Activated CD4-positive, alpha-beta T cell treated with anti-CD3 and anti-CD28 coated beads, Interleukin-2, amount 10 ng/mL, durations not matched to agents 24 days and 14 days (primary cell): ENCODE measurements at regions of chr11 and their contacts with region 1.

Region 1: GRCh38 chr11:102476812-102477211 is 24.2 kb upstream of the TMEM123 start:
- DNase-seq: peak; percentile 79
- H3K4me3 Mint-ChIP-seq: peak overlapping the region; percentile 52
- H3K27ac Mint-ChIP-seq: peak overlapping the region; percentile 83
- H3K4me1 Mint-ChIP-seq: peaks cover 55% of the 10 kb centered on the region
- H3K27me3 Mint-ChIP-seq: no peaks in the 10 kb centered on the region

Region 2: GRCh38 chr11:102464859-102465500 is 11.8 kb before region 1 on chr11:
- intact Hi-C with region 1: loop called (anchors 1 kb)
- DNase-seq: no peak
- H3K4me3 Mint-ChIP-seq: peak overlapping the region; percentile 19
- H3K27ac Mint-ChIP-seq: no peak overlapping the region
- H3K4me1 Mint-ChIP-seq: peaks cover 59% of the 10 kb centered on the region
- H3K27me3 Mint-ChIP-seq: no peaks in the 10 kb centered on the region

Region 3: GRCh38 chr11:102489186-102490145 is 12.7 kb after region 1 on chr11:
- intact Hi-C with region 1: loop called (anchors 1 kb)
- DNase-seq: no peak
- H3K4me3 Mint-ChIP-seq: no peak overlapping the region
- H3K27ac Mint-ChIP-seq: no peak overlapping the region
- H3K4me1 Mint-ChIP-seq: peaks cover 54% of the 10 kb centered on the region
- H3K27me3 Mint-ChIP-seq: peaks cover 2% of the 10 kb centered on the region